ENCODE measurements at regions of chr1 and their contacts with region 1.

Region 1: DNA sequence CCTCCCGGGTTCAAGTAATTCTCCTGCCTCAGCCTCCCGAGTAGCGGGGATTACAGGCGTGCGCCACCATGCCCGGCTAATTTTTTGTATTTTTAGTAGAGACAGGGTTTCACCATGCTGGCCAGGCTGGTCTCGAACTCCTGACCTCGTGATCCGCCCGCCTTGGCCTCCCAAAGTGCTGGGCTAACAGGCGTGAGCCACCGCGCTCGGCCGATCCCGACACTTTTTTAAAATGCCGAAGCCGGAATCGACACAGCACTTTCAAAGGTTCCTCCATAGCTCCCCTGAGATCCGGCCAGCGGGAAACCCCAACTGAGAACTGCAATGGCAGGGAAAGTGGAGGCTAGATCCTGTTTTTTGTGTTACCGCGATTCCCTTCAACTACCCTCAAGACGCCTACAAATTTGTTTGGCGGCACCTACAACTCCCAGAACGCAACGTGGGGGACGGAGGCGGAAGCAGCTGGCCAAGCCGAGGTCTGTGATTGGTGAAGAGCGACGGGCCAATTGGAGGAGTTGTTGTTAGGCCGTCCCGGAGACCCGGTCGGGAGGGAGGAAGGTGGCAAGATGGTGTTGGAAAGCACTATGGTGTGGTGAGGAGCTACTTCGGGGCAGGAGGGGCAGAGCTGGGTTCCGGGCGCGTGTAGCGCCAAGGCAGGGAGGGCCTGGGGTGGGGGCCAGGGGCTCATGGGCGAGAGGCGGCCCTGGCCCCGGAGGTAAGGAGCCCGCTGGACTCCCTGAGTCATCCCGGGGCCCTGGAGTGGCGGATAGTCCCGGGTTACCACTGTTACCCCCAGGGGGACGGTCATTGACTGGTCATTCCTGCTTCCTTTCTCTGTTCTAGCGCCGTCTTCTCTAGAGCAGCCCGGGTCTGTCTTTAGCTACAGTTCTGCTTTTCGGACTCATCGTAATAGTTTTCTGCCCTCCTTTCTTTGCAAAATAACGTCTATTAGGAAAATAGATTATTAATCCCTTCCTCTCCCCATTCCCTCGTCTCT is at the start of gene PSMD4:
- DNase-seq: peak; percentile 97
- H3K4me3 ChIP-seq: peak within 1 kb of the TSS; percentile 88 to 99
- H3K27ac ChIP-seq: peak within 1 kb of the TSS; percentile 80 to 82
- H3K4me1 ChIP-seq: peaks cover 12% of the 10 kb centered on the region
- H3K27me3 ChIP-seq: no peaks in the 10 kb centered on the region
- CTCF ChIP-seq: peak in 1 of 3 experiments; percentile 5
- POLR2A ChIP-seq: no peak
- total RNA-seq, gene PSMD4: 164 to 196 TPM

Region 2: DNA sequence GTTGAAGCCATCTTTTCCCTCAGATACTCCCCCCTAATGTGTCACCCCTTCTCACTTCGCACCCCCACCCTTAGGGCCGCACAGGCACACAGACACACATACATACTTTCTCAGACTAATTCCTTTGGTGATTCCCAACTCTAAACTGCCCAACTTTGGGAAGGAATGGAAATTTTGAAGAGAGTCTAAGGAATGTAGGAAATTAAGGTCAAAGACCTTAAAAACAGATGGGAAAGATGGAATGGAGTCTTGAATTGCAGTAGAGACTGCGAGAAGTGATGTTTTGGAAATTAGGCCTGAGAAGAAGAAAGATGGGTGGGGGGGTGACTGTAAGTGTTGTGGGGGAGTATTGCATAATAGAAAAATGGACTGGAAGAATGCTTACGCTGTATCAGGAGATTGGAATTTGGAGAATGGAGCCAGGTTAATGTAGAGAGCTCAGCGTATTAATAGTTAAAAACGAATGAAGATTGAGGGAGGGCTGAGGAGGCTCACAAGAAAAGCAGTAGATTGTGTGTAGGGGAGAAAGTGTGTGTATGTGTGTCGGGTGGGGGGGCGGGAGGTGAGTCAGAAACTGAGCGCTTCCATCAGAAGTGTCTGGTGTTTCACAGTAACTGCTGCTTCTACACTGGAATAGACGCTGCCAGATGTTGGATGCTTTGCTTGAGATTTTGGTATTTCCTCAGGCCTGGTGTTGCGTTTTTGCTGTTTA is 54.5 kb before region 1 on chr1:
- intact Hi-C with region 1: loop called (anchors 10 kb)
- DNase-seq: no peak
- H3K4me3 ChIP-seq: peak overlapping the region; percentile 77 to 96
- H3K27ac ChIP-seq: peak overlapping the region; percentile 92 to 96
- H3K4me1 ChIP-seq: peaks cover 39% of the 10 kb centered on the region
- H3K27me3 ChIP-seq: no peaks in the 10 kb centered on the region
- CTCF ChIP-seq: no peak
- POLR2A ChIP-seq: no peak

Measured in testis (tissue), 5 donors.